ENCODE measurements at regions of chr5 and their contacts with region 1.

Region 1: GRCh38 chr5:36854402-36855140 is 22.0 kb upstream of the NIPBL start:
- DNase-seq: no peak
- H3K4me3 ChIP-seq: peak overlapping the region in 1 of 4 experiments; percentile 6; a peak in 1 of 8 replicates
- H3K27ac ChIP-seq: no peak overlapping the region; the same call in 1 of the 2 replicates
- H3K4me1 ChIP-seq: 0 out of 7 replicates have a peak, but pooled peaks cover 0 to 4% (median 0%) of the 10 kb centered on the region in 4 experiments
- H3K27me3 ChIP-seq: no peaks in the 10 kb centered on the region
- CTCF ChIP-seq: no peak
- EP300 ChIP-seq: peak in 1 of 2 experiments; percentile 99; a peak in 2 of 3 replicates
- POLR2A ChIP-seq: no peak
- RAD21 ChIP-seq: no peak

Region 2: DNA sequence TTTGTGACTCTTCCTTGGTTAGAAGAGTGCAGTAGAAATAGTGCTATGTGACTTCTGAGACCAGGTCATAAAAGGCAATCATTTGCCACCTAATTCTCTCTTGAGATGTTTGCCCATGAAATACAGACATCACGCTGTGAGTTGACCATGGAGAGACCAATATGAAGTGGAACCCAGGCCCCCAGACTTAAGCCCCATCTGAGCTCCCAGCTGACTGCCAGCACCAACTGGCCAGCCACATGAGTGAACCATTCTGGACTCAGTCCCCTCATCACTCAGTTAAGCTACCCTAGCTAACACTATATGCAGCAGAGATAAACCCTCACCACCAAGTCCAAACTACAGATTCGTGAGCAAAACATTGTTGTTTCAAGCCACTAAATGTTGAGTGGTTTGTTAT is 38.7 kb before region 1 on chr5:
- CTCF ChIA-PET with region 1: no interaction called
- POLR2A ChIA-PET with region 1: no interaction called
- DNase-seq: no peak
- H3K4me3 ChIP-seq: no peak overlapping the region
- H3K27ac ChIP-seq: no peak overlapping the region
- H3K4me1 ChIP-seq: no peaks in the 10 kb centered on the region
- H3K27me3 ChIP-seq: peaks cover 0 to 2% (median 0%) of the 10 kb centered on the region in 4 experiments; a peak in 1 of 7 replicates
- CTCF ChIP-seq: no peak
- EP300 ChIP-seq: no peak
- POLR2A ChIP-seq: no peak
- RAD21 ChIP-seq: no peak

Region 3: GRCh38 chr5:36870399-36871040 is 15.9 kb after region 1 on chr5:
- CTCF ChIA-PET with region 1: interaction called, 10 read pairs
- POLR2A ChIA-PET with region 1: interaction called, 6 read pairs
- DNase-seq: no peak
- H3K4me3 ChIP-seq: no peak overlapping the region
- H3K27ac ChIP-seq: no peak overlapping the region
- H3K4me1 ChIP-seq: peaks cover 0 to 4% (median 0%) of the 10 kb centered on the region in 4 experiments; a peak in 4 of 7 replicates
- H3K27me3 ChIP-seq: no peaks in the 10 kb centered on the region
- CTCF ChIP-seq: peak in 2 of 3 experiments; percentile 36 to 57; a peak in 2 of 4 replicates
- EP300 ChIP-seq: no peak
- POLR2A ChIP-seq: no peak
- RAD21 ChIP-seq: peak; percentile 52 to 59

Measured in H1 (cell line).